PC-3 (cell line): ENCODE measurements at regions of chr2 and their contacts with region 1.

Region 1: GRCh38 chr2:44061876-44062275 is 66.1 kb upstream of the LRPPRC start:
- DNase-seq: no peak
- ATAC-seq: no peak
- H3K4me3 ChIP-seq: no peak overlapping the region
- H3K27ac ChIP-seq: no peak overlapping the region
- H3K4me1 ChIP-seq: no peaks in the 10 kb centered on the region
- H3K27me3 ChIP-seq: no peaks in the 10 kb centered on the region
- CTCF ChIP-seq: no peak

Region 2: GRCh38 chr2:43745457-43745856 is 316.4 kb before region 1 on chr2:
- CTCF ChIA-PET with region 1: no interaction called
- POLR2A ChIA-PET with region 1: no interaction called
- intact Hi-C with region 1: no loop called
- DNase-seq: no peak
- ATAC-seq: no peak
- H3K4me3 ChIP-seq: no peak overlapping the region
- H3K27ac ChIP-seq: no peak overlapping the region
- H3K4me1 ChIP-seq: no peaks in the 10 kb centered on the region
- H3K27me3 ChIP-seq: no peaks in the 10 kb centered on the region
- CTCF ChIP-seq: no peak

Region 3: DNA sequence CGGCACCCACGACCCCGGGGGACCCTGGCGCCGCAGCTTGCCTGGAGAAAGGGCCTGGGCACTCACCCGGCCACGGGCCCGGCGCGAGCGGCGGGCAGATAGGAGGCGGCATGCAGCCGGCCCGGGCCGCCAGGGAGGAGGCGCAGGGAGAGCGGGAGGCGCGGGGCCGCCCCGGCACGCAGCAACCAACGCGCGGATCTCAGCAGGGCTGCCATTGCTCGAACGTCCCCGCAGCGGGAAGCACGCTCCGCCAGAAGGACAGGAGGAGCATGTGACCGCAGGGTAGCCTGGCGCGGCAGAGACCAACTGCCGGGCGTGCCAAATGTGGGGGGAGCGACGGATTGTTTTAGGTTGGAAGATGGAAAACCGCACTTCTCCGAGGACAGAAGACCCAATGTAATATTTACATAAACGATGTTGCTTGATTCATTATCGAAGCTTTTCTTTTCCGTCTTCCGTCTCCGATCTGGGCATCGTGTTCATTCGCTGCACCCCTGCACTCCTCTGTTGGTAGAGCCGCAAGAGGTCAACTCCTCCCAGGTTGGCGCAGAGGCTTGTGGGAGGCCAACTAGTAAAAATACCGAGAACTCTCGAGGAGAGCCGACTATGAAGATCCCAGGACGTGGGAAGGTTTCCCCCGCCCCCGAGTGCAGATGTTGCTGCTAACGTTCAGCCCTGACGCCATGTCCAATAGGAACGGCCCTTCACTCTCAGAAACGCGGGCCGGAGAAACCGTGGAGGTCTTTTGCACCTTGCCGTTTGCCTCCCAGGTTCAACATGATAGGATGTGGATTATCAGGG is 65.9 kb before region 1 on chr2 and contains the start of gene LRPPRC:
- CTCF ChIA-PET with region 1: interaction called, 11 read pairs
- POLR2A ChIA-PET with region 1: no interaction called
- intact Hi-C with region 1: no loop called
- DNase-seq: peak; percentile 94
- ATAC-seq: peak; percentile 93
- H3K4me3 ChIP-seq: peak within 1 kb of the TSS; percentile 89
- H3K27ac ChIP-seq: peak within 1 kb of the TSS; percentile 33; the same call in 1 of the 2 replicates
- H3K4me1 ChIP-seq: peaks cover 13% of the 10 kb centered on the region
- H3K27me3 ChIP-seq: no peaks in the 10 kb centered on the region
- CTCF ChIP-seq: no peak
- total RNA-seq, gene LRPPRC: 94.8 and 113 TPM in 2 replicates